Posterior vena cava (tissue), 2 donors: ENCODE measurements at regions of chr6 and their contacts with region 1.

Region 1: GRCh38 chr6:18343741-18344140 is 43.4 kb upstream of the RNF144B start:
- DNase-seq: no peak

Region 2: GRCh38 chr6:17107863-17108262 is 1235.9 kb before region 1 on chr6:
- intact Hi-C with region 1: loop called in 1 of 2 experiments (anchors 5 kb)
- DNase-seq: no peak

Region 3: DNA sequence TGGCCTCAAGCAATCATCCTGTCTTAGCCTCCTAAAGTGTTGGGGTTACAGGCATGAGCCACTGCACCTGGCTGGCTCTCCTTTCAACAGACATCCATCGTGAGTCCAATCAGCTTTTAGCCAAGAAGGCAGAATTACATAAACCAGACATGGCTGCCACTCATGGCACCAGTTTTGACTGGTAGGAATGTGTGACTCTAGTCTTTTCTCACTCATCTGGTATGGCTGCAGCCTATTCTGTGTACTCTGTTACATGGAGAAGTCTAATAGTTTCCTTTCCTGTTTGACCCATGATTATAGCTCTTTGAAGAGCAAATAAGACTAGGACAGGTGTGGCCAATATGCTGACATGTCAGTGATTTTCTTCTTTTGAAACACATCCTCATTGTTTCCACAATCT is 16.4 kb after region 1 on chr6:
- intact Hi-C with region 1: loop called in 1 of 2 experiments (anchors 2 kb)
- DNase-seq: no peak